ENCODE measurements at regions of chr17 and their contacts with region 1.

Region 1: DNA sequence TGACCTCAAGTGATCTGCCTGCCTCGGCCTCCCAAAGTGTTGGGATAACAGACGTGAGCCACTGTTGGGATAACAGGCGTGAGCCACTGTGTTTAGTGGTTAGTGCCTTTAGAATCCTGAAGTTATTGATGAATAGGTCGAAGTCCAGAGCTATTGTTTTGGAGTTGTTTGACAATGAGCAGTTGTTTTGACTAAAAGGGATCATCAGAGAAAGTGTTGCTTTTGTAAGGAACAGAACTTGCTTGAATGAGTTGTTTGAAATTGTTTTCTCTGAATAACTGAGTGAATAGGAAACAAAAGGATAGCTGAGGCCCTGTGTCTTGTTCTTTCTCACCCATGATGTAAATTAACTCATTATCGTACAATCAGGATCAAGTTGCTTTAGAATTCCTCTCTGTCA is 46.6 kb downstream of the PRPSAP2 start:
- DNase-seq: no peak
- ATAC-seq: no peak
- H3K4me3 Mint-ChIP-seq: no peak overlapping the region
- H3K27ac Mint-ChIP-seq: no peak overlapping the region
- H3K4me1 Mint-ChIP-seq: peaks cover 26 to 54% (median 39%) of the 10 kb centered on the region in 4 donors
- H3K27me3 Mint-ChIP-seq: no peaks in the 10 kb centered on the region

Region 2: GRCh38 chr17:18921912-18922451 is 17.5 kb after region 1 on chr17:
- POLR2A ChIA-PET with region 1: interaction called, 10 read pairs
- DNase-seq: no peak
- ATAC-seq: no peak
- H3K4me3 Mint-ChIP-seq: peak overlapping the region in 7 of 10 donors; percentile 1 to 69 (median 48)
- H3K27ac Mint-ChIP-seq: peak overlapping the region in 7 of 10 donors; percentile 0 to 84 (median 34)
- H3K4me1 Mint-ChIP-seq: peaks cover 28 to 77% (median 72%) of the 10 kb centered on the region in 4 donors
- H3K27me3 Mint-ChIP-seq: no peaks in the 10 kb centered on the region

Measured in naive thymus-derived CD8-positive, alpha-beta T cell (primary cell).